A549 (cell line): ENCODE measurements at regions of chr20 and their contacts with region 1.

Region 1: GRCh38 chr20:21702553-21703470 is 2.7 kb upstream of the PAX1 start:
- DNase-seq: peak; percentile 65 to 69
- ATAC-seq: peak; percentile 85 to 97
- H3K4me3 ChIP-seq: peak overlapping the region; percentile 44
- H3K27ac ChIP-seq: no peak overlapping the region
- H3K4me1 ChIP-seq: no peaks in the 10 kb centered on the region
- CTCF ChIP-seq: peak; percentile 66
- EP300 ChIP-seq: no peak
- POLR2A ChIP-seq: no peak
- RAD21 ChIP-seq: peak; percentile 55 to 65

Region 2: DNA sequence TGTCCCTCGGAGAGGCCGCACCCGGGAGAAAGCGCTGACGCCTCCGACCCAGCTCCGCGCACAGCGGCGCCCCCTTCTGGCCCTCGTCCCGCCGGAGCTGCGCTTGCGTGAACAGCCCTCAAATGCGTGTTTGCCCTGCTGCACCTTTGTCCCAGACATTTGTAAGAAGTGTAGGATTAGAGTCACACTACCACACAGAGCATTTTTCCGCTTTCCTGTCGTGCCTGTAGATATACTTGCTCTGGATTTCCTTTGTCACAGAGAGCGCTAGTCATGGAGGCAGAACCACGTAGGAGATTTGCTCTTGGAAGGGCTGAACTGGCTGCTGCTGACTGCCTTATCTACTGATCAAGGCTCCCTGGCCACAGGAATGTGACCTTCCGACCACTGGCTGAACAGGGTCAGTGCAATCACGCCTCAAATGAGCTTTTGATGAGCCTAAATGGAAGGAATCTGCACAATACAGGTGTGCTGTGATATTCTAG is 65.0 kb after region 1 on chr20:
- CTCF ChIA-PET with region 1: interaction called, 10 read pairs
- POLR2A ChIA-PET with region 1: no interaction called
- DNase-seq: peak; percentile 10 to 36
- ATAC-seq: peak; percentile 70 to 88; a peak in 5 of 6 replicates
- H3K4me3 ChIP-seq: no peak overlapping the region
- H3K27ac ChIP-seq: no peak overlapping the region
- H3K4me1 ChIP-seq: no peaks in the 10 kb centered on the region
- CTCF ChIP-seq: peak; percentile 31
- EP300 ChIP-seq: no peak
- POLR2A ChIP-seq: no peak
- RAD21 ChIP-seq: 0 out of 5 replicates have a peak, but pooled peaks of 1 of the 2 experiments have one; percentile 12

Region 3: DNA sequence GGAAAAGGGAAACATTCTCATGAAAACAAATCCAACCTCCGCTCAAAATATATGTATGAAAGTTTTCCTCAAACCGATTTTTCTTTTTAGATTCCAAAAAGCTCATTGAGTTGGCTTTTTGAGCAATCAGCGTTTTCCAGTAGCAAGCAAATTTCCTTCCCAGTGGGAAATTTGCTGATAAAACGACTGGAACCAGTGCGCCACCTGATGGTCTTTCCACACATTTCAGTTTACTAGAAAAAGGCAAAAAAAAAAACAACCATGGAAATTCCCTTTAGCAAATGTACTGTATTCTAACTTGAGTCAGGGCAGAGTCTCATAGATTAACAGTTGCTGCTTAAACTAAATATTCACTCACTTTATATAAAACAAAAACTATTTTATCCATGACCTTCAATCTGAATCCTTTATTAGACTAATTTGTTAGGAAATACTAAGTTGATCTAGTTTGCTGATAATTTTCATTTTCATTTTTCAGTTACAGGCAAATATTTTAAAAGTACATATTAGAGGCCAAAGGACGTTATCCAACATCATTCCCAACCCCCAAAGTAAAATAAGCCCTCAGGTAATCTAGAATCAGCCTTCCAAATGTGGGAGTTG is 610.0 kb after region 1 on chr20:
- CTCF ChIA-PET with region 1: interaction called, 12 read pairs
- POLR2A ChIA-PET with region 1: no interaction called
- DNase-seq: peak; percentile 56 to 63
- ATAC-seq: peak in 1 of 2 experiments; percentile 50; a peak in 3 of 6 replicates
- H3K4me3 ChIP-seq: no peak overlapping the region
- H3K27ac ChIP-seq: no peak overlapping the region
- H3K4me1 ChIP-seq: no peaks in the 10 kb centered on the region
- CTCF ChIP-seq: peak; percentile 87
- EP300 ChIP-seq: no peak
- POLR2A ChIP-seq: no peak
- RAD21 ChIP-seq: peak; percentile 73 to 84